Natural killer cell (primary cell): ENCODE measurements at regions of chr1 and their contacts with region 1.

Region 1: DNA sequence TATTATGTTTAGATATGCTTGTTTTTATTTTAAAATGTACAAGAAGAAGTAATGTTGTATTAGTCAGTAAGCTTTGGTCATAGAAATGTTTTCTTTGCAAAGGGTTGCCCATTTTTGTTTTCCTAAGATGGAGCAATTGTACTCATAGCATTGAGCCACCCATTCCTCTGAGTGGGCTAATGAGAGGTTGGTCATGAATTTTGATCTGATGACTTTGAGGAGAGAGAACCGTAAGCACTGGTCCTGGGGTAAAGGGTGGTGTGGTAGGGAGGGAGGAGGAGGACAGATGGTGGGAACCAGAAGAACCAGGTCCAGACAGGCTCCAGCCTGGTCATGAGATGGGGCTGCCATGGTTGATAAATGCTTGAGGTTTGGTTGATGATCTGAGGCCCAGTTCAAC is 15.9 kb upstream of the SLC6A9 start:
- DNase-seq: no peak
- ATAC-seq: no peak
- H3K4me3 ChIP-seq: no peak overlapping the region
- H3K4me3 Mint-ChIP-seq: no peak overlapping the region
- H3K27ac ChIP-seq: no peak overlapping the region
- H3K27ac Mint-ChIP-seq: no peak overlapping the region
- H3K4me1 ChIP-seq: no peaks in the 10 kb centered on the region
- H3K4me1 Mint-ChIP-seq: peaks cover 0 to 6% of the 10 kb centered on the region in 2 donors
- H3K27me3 ChIP-seq: no peaks in the 10 kb centered on the region
- H3K27me3 Mint-ChIP-seq: peaks cover 8 to 11% of the 10 kb centered on the region in 2 donors
- CTCF ChIP-seq: no peak

Region 2: GRCh38 chr1:44002606-44003157 is 44.4 kb before region 1 on chr1:
- intact Hi-C with region 1: loop called (anchors 1 kb)
- DNase-seq: no peak
- ATAC-seq: no peak
- H3K4me3 ChIP-seq: no peak overlapping the region
- H3K4me3 Mint-ChIP-seq: no peak overlapping the region
- H3K27ac ChIP-seq: no peak overlapping the region
- H3K27ac Mint-ChIP-seq: no peak overlapping the region
- H3K4me1 ChIP-seq: no peaks in the 10 kb centered on the region
- H3K4me1 Mint-ChIP-seq: no peaks in the 10 kb centered on the region
- H3K27me3 ChIP-seq: no peaks in the 10 kb centered on the region
- H3K27me3 Mint-ChIP-seq: no peaks in the 10 kb centered on the region
- CTCF ChIP-seq: no peak

Region 3: DNA sequence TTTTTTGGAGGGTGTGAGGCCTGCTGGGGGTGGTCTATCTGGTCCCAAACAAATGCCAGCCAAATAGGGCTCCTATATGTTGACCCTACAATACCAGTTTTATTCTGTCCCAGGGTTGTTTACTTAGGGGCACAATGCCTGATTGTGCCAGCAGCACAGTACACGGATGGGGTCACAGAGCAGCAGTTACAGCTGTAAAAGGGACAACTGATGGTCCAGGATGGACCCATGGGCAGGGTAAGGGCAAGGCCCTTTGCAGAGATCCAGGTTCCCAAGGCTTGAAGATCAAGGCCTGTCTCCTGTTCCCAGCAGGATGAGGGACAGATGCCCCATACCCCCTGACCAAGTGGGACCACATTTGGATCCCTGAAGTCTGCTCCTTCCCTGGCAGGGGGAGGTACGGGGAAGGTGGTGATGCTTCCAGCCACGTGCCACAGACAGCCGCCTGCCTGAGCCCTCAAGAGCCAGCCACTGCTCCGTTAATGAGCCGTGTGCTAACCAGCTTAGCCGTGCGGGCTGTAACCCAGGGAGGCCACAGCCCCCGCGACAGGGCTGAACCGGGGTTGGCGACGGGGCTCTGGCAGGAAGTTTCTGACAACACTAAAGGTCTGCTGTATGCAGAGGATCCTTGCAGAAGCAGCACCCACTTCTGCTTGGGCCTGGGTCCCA is 34.1 kb before region 1 on chr1:
- intact Hi-C with region 1: no loop called
- DNase-seq: no peak
- ATAC-seq: no peak
- H3K4me3 ChIP-seq: no peak overlapping the region
- H3K4me3 Mint-ChIP-seq: no peak overlapping the region
- H3K27ac ChIP-seq: no peak overlapping the region
- H3K27ac Mint-ChIP-seq: no peak overlapping the region
- H3K4me1 ChIP-seq: no peaks in the 10 kb centered on the region
- H3K4me1 Mint-ChIP-seq: no peaks in the 10 kb centered on the region
- H3K27me3 ChIP-seq: no peaks in the 10 kb centered on the region
- H3K27me3 Mint-ChIP-seq: peaks cover 0 to 7% of the 10 kb centered on the region in 2 donors
- CTCF ChIP-seq: no peak

Region 4: DNA sequence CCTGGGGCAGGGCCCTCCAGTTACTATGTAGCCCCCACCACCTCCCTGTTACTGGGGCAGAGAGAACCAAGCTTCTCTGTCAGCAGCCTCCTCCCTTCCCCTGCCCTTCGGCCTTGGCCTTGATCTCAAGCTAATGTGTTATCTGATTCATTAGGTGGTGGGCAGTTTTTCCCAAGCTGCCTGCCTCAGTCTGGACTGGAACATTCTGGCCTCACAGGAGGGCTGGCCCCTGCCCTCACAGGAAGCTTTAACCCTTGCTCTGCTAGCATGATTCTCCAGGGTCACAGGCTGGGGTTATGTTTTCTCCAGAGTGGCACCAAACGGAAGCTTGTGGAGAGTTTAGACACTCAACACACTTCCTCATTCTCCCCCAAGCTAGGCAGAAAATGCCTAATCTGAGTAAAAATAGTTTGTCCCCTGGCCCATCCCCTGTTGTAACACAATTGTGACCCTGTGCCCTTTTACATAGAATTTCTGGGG is 21.4 kb after region 1 on chr1:
- intact Hi-C with region 1: no loop called
- DNase-seq: no peak
- ATAC-seq: no peak
- H3K4me3 ChIP-seq: no peak overlapping the region
- H3K4me3 Mint-ChIP-seq: no peak overlapping the region
- H3K27ac ChIP-seq: no peak overlapping the region
- H3K27ac Mint-ChIP-seq: no peak overlapping the region
- H3K4me1 ChIP-seq: peaks cover 18% of the 10 kb centered on the region
- H3K4me1 Mint-ChIP-seq: peaks cover 0 to 4% of the 10 kb centered on the region in 2 donors
- H3K27me3 ChIP-seq: no peaks in the 10 kb centered on the region
- H3K27me3 Mint-ChIP-seq: peaks cover 9 to 25% of the 10 kb centered on the region in 2 donors
- CTCF ChIP-seq: no peak

Region 5: GRCh38 chr1:44707112-44707881 is 660.2 kb after region 1 on chr1:
- intact Hi-C with region 1: no loop called
- DNase-seq: no peak
- ATAC-seq: peak in 1 of 3 donors; percentile 21
- H3K4me3 ChIP-seq: no peak overlapping the region
- H3K4me3 Mint-ChIP-seq: no peak overlapping the region
- H3K27ac ChIP-seq: no peak overlapping the region
- H3K27ac Mint-ChIP-seq: peak overlapping the region in 1 of 2 donors; percentile 71
- H3K4me1 ChIP-seq: peaks cover 7% of the 10 kb centered on the region
- H3K4me1 Mint-ChIP-seq: peaks cover 7 to 8% of the 10 kb centered on the region in 2 donors
- H3K27me3 ChIP-seq: no peaks in the 10 kb centered on the region
- H3K27me3 Mint-ChIP-seq: peaks cover 0 to 14% of the 10 kb centered on the region in 2 donors
- CTCF ChIP-seq: no peak